ENCODE measurements at regions of chr7 and their contacts with region 1.

Region 1: DNA sequence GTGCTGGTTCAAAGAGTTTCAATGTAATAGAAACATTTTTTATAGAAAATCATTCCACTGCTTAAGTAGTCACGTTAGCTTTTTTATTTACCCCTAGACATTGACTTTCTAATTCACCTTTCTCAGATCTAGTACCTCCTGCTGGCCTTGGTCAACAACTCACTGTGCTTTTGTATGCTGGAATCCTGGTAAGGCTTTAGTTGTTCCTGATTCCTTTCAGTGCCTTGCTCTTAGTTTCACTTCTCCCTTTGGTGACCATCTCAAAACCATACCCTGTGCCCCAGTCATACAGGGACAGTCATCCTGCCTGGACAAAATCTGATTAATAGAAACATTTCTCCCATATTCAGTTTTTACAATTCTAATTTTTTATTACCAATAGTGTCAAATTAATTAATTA is 130.2 kb downstream of the GPR37 start:
- DNase-seq: no peak
- ATAC-seq: no peak
- H3K4me3 ChIP-seq: no peak overlapping the region
- H3K27ac ChIP-seq: no peak overlapping the region
- H3K4me1 ChIP-seq: no peaks in the 10 kb centered on the region
- H3K27me3 ChIP-seq: no peaks in the 10 kb centered on the region
- CTCF ChIP-seq: no peak
- POLR2A ChIP-seq: no peak
- RAD21 ChIP-seq: no peak

Region 2: GRCh38 chr7:124679586-124680260 is 44.3 kb after region 1 on chr7:
- CTCF ChIA-PET with region 1: no interaction called
- POLR2A ChIA-PET with region 1: no interaction called
- dilution Hi-C with region 1: no loop called
- in situ Hi-C with region 1: no loop called
- intact Hi-C with region 1: loop called (anchors 2 kb)
- DNase-seq: no peak
- ATAC-seq: no peak
- H3K4me3 ChIP-seq: no peak overlapping the region
- H3K27ac ChIP-seq: no peak overlapping the region
- H3K4me1 ChIP-seq: no peaks in the 10 kb centered on the region
- H3K27me3 ChIP-seq: no peaks in the 10 kb centered on the region
- CTCF ChIP-seq: no peak
- POLR2A ChIP-seq: no peak
- RAD21 ChIP-seq: no peak

Region 3: GRCh38 chr7:124813994-124814798 is 178.8 kb after region 1 on chr7:
- CTCF ChIA-PET with region 1: no interaction called
- POLR2A ChIA-PET with region 1: no interaction called
- dilution Hi-C with region 1: no loop called
- in situ Hi-C with region 1: no loop called
- intact Hi-C with region 1: no loop called
- DNase-seq: no peak
- ATAC-seq: no peak
- H3K4me3 ChIP-seq: no peak overlapping the region
- H3K27ac ChIP-seq: no peak overlapping the region
- H3K4me1 ChIP-seq: no peaks in the 10 kb centered on the region
- H3K27me3 ChIP-seq: no peaks in the 10 kb centered on the region
- CTCF ChIP-seq: no peak
- POLR2A ChIP-seq: no peak
- RAD21 ChIP-seq: no peak